Activated CD8-positive, alpha-beta T cell treated with anti-CD3 and anti-CD28 coated beads for 36 hours (primary cell): ENCODE measurements at regions of chr3 and their contacts with region 1.

Region 1: GRCh38 chr3:107676469-107677309 is 153.9 kb downstream of the BBX start:
- DNase-seq: no peak
- ATAC-seq: no peak
- H3K4me3 Mint-ChIP-seq: no peak overlapping the region
- H3K27ac Mint-ChIP-seq: no peak overlapping the region
- H3K4me1 Mint-ChIP-seq: peaks cover 30% of the 10 kb centered on the region
- H3K27me3 Mint-ChIP-seq: no peaks in the 10 kb centered on the region
- CTCF ChIP-seq: peak; percentile 64

Region 2: GRCh38 chr3:107574650-107575049 is 102.0 kb before region 1 on chr3:
- CTCF ChIA-PET with region 1: interaction called, 22 read pairs
- POLR2A ChIA-PET with region 1: no interaction called
- intact Hi-C with region 1: no loop called
- DNase-seq: peak; percentile 22
- ATAC-seq: no peak
- H3K4me3 Mint-ChIP-seq: no peak overlapping the region
- H3K27ac Mint-ChIP-seq: no peak overlapping the region
- H3K4me1 Mint-ChIP-seq: peaks cover 27% of the 10 kb centered on the region
- H3K27me3 Mint-ChIP-seq: no peaks in the 10 kb centered on the region
- CTCF ChIP-seq: peak; percentile 69

Region 3: GRCh38 chr3:107690522-107691138 is 13.9 kb after region 1 on chr3:
- CTCF ChIA-PET with region 1: interaction called, 60 read pairs
- POLR2A ChIA-PET with region 1: interaction called, 3 read pairs
- intact Hi-C with region 1: no loop called
- DNase-seq: no peak
- ATAC-seq: peak; percentile 72
- H3K4me3 Mint-ChIP-seq: no peak overlapping the region
- H3K27ac Mint-ChIP-seq: no peak overlapping the region
- H3K4me1 Mint-ChIP-seq: peaks cover 8% of the 10 kb centered on the region
- H3K27me3 Mint-ChIP-seq: no peaks in the 10 kb centered on the region
- CTCF ChIP-seq: peak; percentile 58

Region 4: GRCh38 chr3:107753480-107753879 is 76.8 kb after region 1 on chr3:
- CTCF ChIA-PET with region 1: interaction called, 16 read pairs
- POLR2A ChIA-PET with region 1: no interaction called
- intact Hi-C with region 1: no loop called
- DNase-seq: peak; percentile 39
- ATAC-seq: peak; percentile 72
- H3K4me3 Mint-ChIP-seq: no peak overlapping the region
- H3K27ac Mint-ChIP-seq: no peak overlapping the region
- H3K4me1 Mint-ChIP-seq: no peaks in the 10 kb centered on the region
- H3K27me3 Mint-ChIP-seq: no peaks in the 10 kb centered on the region
- CTCF ChIP-seq: peak; percentile 18

Region 5: DNA sequence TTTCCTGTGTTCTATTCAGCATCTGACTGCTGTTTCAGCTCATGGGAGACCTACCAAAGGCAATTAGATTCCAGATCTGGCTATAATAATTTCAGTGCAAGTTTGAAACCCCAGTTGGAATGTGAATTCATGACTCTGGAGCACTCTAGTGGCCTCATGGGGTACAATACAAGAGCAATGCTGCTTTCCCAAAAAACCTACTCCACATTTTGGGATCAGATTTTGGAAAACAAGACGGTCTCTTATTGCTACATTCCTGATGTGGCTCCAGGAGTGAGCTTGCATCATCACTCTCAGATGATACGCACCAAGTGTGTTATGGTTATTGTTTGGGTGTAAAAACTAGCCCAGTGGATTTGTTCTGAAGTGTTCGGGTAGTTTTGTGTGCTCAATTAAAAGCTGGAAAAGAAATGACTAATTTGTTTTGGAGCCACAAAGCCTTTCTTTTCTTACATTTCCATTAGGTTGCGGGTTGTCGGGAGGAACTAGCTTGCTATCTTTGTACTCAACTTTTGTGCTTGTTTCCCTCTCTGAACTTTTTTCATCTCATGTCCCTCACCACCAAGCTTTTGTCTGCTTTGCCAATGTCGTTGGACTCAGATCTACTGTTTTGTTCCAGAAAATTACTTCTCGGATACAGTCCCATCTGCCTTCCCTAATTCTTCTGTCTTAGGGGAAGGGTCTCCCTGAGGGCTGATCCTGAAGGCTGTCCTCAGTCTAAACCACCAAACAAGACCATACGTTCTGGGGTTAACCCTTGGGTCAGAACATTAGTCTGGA is 118.2 kb after region 1 on chr3:
- CTCF ChIA-PET with region 1: no interaction called
- POLR2A ChIA-PET with region 1: no interaction called
- intact Hi-C with region 1: no loop called
- DNase-seq: no peak
- ATAC-seq: no peak
- H3K4me3 Mint-ChIP-seq: no peak overlapping the region
- H3K27ac Mint-ChIP-seq: no peak overlapping the region
- H3K4me1 Mint-ChIP-seq: peaks cover 13% of the 10 kb centered on the region
- H3K27me3 Mint-ChIP-seq: no peaks in the 10 kb centered on the region
- CTCF ChIP-seq: no peak

Region 6: GRCh38 chr3:107927361-107928083 is 250.8 kb after region 1 on chr3:
- CTCF ChIA-PET with region 1: interaction called, 12 read pairs
- POLR2A ChIA-PET with region 1: no interaction called
- intact Hi-C with region 1: no loop called
- DNase-seq: peak; percentile 79
- ATAC-seq: peak; percentile 96
- H3K4me3 Mint-ChIP-seq: peak overlapping the region; percentile 75
- H3K27ac Mint-ChIP-seq: peak overlapping the region; percentile 32
- H3K4me1 Mint-ChIP-seq: peaks cover 9% of the 10 kb centered on the region
- H3K27me3 Mint-ChIP-seq: peaks cover 6% of the 10 kb centered on the region
- CTCF ChIP-seq: peak; percentile 94